CD4-positive, alpha-beta memory T cell (primary cell): ENCODE measurements at regions of chr15 and their contacts with region 1.

Region 1: GRCh38 chr15:45402162-45402954 is 24.0 kb upstream of the GATM start:
- DNase-seq: peak; percentile 91 to 97 (median 96)
- H3K4me3 ChIP-seq: peak overlapping the region; percentile 71 to 77
- H3K4me3 Mint-ChIP-seq: peak overlapping the region; percentile 91 to 99 (median 95)
- H3K27ac ChIP-seq: peak overlapping the region; percentile 89
- H3K27ac Mint-ChIP-seq: peak overlapping the region; percentile 97 to 99 (median 98)
- H3K4me1 ChIP-seq: peaks cover 32% of the 10 kb centered on the region
- H3K4me1 Mint-ChIP-seq: peaks cover 20 to 41% (median 32%) of the 10 kb centered on the region in 4 donors
- H3K27me3 ChIP-seq: no peaks in the 10 kb centered on the region
- H3K27me3 Mint-ChIP-seq: no peaks in the 10 kb centered on the region

Region 2: DNA sequence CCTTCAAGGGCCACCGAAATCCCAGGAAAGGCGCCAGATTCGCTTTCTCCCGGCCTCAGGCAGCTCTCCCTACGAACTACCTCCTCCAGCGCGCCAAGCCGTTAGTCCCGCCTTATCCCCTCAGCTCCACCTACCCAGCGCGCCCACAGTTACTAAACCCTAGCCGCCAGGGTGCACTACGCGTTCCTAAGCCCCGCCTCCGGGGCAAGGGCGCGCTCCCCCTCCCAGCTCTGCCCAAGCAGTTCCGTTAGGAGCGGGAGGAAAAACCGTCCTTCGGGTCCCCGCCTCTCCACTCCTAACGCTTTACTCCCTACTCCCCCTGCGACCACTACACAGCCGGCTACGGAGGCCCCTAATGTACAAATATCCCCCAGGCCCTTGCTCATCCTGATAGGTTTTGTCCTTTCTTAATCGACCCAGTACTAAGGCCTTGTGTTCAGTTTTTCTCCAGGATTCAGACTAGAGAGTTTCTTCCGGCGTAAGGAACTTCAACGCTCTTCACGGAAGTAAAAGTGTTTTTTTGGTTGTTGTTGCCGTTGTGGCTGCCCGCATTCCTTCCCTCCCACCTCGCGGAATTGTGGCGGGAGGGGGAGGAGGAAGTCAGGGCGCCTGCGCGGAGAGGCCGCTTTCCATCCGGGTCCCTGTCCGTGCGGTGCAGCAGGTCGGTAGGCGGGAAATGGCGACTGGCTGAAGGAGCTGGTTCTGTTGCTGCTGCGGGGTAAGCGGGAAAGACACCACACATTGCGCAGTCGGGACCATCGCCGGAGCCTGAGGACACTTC is 975.2 kb before region 1 on chr15 and contains the start of gene CTDSPL2:
- CTCF ChIA-PET with region 1: no interaction called
- POLR2A ChIA-PET with region 1: no interaction called
- intact Hi-C with region 1: loop called (anchors 2 kb)
- DNase-seq: peak; percentile 94 to 96 (median 95)
- H3K4me3 ChIP-seq: peak within 1 kb of the TSS; percentile 57 to 96
- H3K4me3 Mint-ChIP-seq: peak within 1 kb of the TSS; percentile 95 to 100 (median 98)
- H3K27ac ChIP-seq: peak within 1 kb of the TSS; percentile 99
- H3K27ac Mint-ChIP-seq: peak within 1 kb of the TSS; percentile 98 to 100 (median 99)
- H3K4me1 ChIP-seq: peaks cover 38% of the 10 kb centered on the region
- H3K4me1 Mint-ChIP-seq: peaks cover 32 to 66% (median 44%) of the 10 kb centered on the region in 4 donors
- H3K27me3 ChIP-seq: no peaks in the 10 kb centered on the region
- H3K27me3 Mint-ChIP-seq: peaks cover 0 to 2% of the 10 kb centered on the region in 2 donors
- total RNA-seq, gene CTDSPL2: 72.0 to 74.4 TPM

Region 3: GRCh38 chr15:45179221-45179985 is 223.0 kb before region 1 on chr15:
- CTCF ChIA-PET with region 1: interaction called, 13 read pairs
- POLR2A ChIA-PET with region 1: interaction called, 4 read pairs
- intact Hi-C with region 1: loop called (anchors 1 kb)
- DNase-seq: peak; percentile 33 to 54 (median 42)
- H3K4me3 ChIP-seq: no peak overlapping the region
- H3K4me3 Mint-ChIP-seq: no peak overlapping the region
- H3K27ac ChIP-seq: no peak overlapping the region
- H3K27ac Mint-ChIP-seq: peak overlapping the region in 1 of 7 donors; percentile 73
- H3K4me1 ChIP-seq: no peaks in the 10 kb centered on the region
- H3K4me1 Mint-ChIP-seq: peaks cover 4 to 10% (median 8%) of the 10 kb centered on the region in 4 donors
- H3K27me3 ChIP-seq: no peaks in the 10 kb centered on the region
- H3K27me3 Mint-ChIP-seq: no peaks in the 10 kb centered on the region

Region 4: DNA sequence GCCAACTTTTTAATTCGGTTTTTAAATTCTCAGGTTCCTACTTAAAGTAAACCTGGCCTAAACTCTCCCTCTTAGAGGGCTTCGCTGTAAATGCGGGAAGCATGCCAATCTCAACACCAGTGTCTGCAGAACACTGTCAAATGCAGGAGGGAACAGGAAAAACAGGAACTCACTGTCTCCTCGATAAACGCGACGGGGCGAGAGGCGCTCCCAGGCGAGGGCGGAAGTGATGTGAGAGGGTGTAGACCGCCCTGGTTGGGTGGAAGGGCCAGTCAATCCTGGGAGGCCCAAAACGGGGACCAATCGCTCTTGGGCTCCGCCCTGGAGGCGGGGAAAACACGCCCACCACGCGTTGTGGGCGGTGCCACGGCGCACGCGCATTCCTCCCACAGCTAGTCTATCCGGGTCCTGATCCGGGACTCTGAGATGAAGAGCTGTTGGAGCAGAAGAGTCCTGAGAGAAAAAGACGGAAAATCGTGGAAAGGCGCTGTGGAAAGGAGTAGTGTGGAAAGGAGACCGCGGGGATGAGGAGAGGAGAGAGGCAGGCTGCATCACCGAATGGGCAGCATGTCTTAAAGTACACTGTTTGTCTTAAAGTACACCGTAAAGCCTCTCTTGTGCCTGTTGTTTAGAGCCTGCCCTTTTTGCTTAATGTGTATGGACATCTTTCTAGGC is 123.2 kb before region 1 on chr15:
- CTCF ChIA-PET with region 1: no interaction called
- POLR2A ChIA-PET with region 1: no interaction called
- intact Hi-C with region 1: loop called (anchors 1 kb)
- DNase-seq: peak; percentile 95 to 99 (median 98)
- H3K4me3 ChIP-seq: peak overlapping the region; percentile 82 to 83
- H3K4me3 Mint-ChIP-seq: peak overlapping the region; percentile 89 to 98 (median 93)
- H3K27ac ChIP-seq: peak overlapping the region; percentile 70
- H3K27ac Mint-ChIP-seq: peak overlapping the region; percentile 87 to 98 (median 96)
- H3K4me1 ChIP-seq: peaks cover 13% of the 10 kb centered on the region
- H3K4me1 Mint-ChIP-seq: peaks cover 7 to 26% (median 16%) of the 10 kb centered on the region in 4 donors
- H3K27me3 ChIP-seq: no peaks in the 10 kb centered on the region
- H3K27me3 Mint-ChIP-seq: no peaks in the 10 kb centered on the region

Region 5: GRCh38 chr15:45338417-45338816 is 63.9 kb before region 1 on chr15:
- CTCF ChIA-PET with region 1: no interaction called
- POLR2A ChIA-PET with region 1: no interaction called
- intact Hi-C with region 1: no loop called
- DNase-seq: peak in 4 of 5 donors; percentile 7 to 24 (median 10)
- H3K4me3 ChIP-seq: no peak overlapping the region
- H3K4me3 Mint-ChIP-seq: peak overlapping the region in 1 of 8 donors; percentile 4
- H3K27ac ChIP-seq: no peak overlapping the region
- H3K27ac Mint-ChIP-seq: no peak overlapping the region
- H3K4me1 ChIP-seq: peaks cover 8% of the 10 kb centered on the region
- H3K4me1 Mint-ChIP-seq: peaks cover 4 to 9% (median 7%) of the 10 kb centered on the region in 4 donors
- H3K27me3 ChIP-seq: no peaks in the 10 kb centered on the region
- H3K27me3 Mint-ChIP-seq: peaks cover 0 to 5% of the 10 kb centered on the region in 2 donors

Region 6: GRCh38 chr15:45414215-45414885 is 12.0 kb after region 1 on chr15:
- CTCF ChIA-PET with region 1: interaction called, 11 read pairs
- POLR2A ChIA-PET with region 1: interaction called, 30 read pairs
- intact Hi-C with region 1: no loop called
- DNase-seq: peak in 1 of 5 donors; percentile 10
- H3K4me3 ChIP-seq: no peak overlapping the region
- H3K4me3 Mint-ChIP-seq: peak overlapping the region in 5 of 8 donors; percentile 1 to 40 (median 18)
- H3K27ac ChIP-seq: no peak overlapping the region
- H3K27ac Mint-ChIP-seq: peak overlapping the region; percentile 39 to 66 (median 47)
- H3K4me1 ChIP-seq: peaks cover 22% of the 10 kb centered on the region
- H3K4me1 Mint-ChIP-seq: peaks cover 17 to 28% (median 20%) of the 10 kb centered on the region in 4 donors
- H3K27me3 ChIP-seq: no peaks in the 10 kb centered on the region
- H3K27me3 Mint-ChIP-seq: no peaks in the 10 kb centered on the region

Region 7: DNA sequence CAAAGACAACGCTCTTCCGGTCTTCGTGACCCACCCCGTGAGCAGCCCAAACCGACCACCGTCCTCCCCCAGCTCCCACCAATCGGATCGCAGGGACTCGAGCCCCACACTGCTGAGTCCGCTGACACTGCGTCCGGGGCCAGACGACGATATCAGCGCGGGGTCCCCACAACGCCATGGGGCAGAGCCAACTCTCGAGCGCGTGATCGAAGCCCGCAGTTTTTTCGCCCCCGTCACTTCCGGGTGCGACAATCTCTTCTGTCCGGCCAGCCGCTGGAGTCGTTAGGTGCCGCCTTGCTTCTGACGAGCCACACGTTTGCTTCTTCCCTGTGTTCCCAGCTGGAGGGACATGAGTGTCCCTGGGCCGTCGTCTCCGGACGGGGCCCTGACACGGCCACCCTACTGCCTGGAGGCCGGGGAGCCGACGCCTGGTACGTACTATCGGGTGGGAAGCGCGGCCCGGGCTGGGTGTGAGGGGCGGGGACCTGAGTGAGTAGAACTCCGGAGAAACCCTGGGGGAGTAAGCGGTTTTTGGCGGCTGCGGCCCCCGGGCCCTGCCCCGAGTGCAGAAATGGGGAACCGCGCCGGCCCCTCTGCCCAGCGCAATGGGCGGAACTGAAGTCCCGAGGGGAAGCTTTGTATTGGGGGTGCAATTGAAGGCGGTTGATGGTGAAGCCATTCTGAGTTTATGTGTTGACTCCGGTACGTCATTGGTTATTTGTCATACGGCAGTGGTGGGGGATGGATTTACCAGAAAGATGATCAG is 184.9 kb after region 1 on chr15 and contains the start of gene BLOC1S6:
- CTCF ChIA-PET with region 1: interaction called, 3 read pairs
- POLR2A ChIA-PET with region 1: interaction called, 44 read pairs
- intact Hi-C with region 1: no loop called
- DNase-seq: peak; percentile 87 to 91 (median 90)
- H3K4me3 ChIP-seq: peak within 1 kb of the TSS; percentile 89 to 99
- H3K4me3 Mint-ChIP-seq: peak within 1 kb of the TSS; percentile 96 to 100 (median 100)
- H3K27ac ChIP-seq: peak within 1 kb of the TSS; percentile 95
- H3K27ac Mint-ChIP-seq: peak within 1 kb of the TSS; percentile 100
- H3K4me1 ChIP-seq: peaks cover 44% of the 10 kb centered on the region
- H3K4me1 Mint-ChIP-seq: peaks cover 20 to 48% (median 37%) of the 10 kb centered on the region in 4 donors
- H3K27me3 ChIP-seq: no peaks in the 10 kb centered on the region
- H3K27me3 Mint-ChIP-seq: no peaks in the 10 kb centered on the region
- total RNA-seq, gene BLOC1S6: 43.0 to 43.9 TPM